Naive thymus-derived CD4-positive, alpha-beta T cell (primary cell): ENCODE measurements at regions of chr9 and their contacts with region 1.

Region 1: GRCh38 chr9:71975833-71976232 is 64.4 kb downstream of the C9orf85 start:
- DNase-seq: no peak
- ATAC-seq: no peak
- H3K4me3 ChIP-seq: no peak overlapping the region
- H3K4me3 Mint-ChIP-seq: no peak overlapping the region
- H3K27ac ChIP-seq: no peak overlapping the region
- H3K27ac Mint-ChIP-seq: no peak overlapping the region
- H3K4me1 ChIP-seq: no peaks in the 10 kb centered on the region
- H3K4me1 Mint-ChIP-seq: no peaks in the 10 kb centered on the region
- H3K27me3 ChIP-seq: no peaks in the 10 kb centered on the region
- H3K27me3 Mint-ChIP-seq: no peaks in the 10 kb centered on the region

Region 2: DNA sequence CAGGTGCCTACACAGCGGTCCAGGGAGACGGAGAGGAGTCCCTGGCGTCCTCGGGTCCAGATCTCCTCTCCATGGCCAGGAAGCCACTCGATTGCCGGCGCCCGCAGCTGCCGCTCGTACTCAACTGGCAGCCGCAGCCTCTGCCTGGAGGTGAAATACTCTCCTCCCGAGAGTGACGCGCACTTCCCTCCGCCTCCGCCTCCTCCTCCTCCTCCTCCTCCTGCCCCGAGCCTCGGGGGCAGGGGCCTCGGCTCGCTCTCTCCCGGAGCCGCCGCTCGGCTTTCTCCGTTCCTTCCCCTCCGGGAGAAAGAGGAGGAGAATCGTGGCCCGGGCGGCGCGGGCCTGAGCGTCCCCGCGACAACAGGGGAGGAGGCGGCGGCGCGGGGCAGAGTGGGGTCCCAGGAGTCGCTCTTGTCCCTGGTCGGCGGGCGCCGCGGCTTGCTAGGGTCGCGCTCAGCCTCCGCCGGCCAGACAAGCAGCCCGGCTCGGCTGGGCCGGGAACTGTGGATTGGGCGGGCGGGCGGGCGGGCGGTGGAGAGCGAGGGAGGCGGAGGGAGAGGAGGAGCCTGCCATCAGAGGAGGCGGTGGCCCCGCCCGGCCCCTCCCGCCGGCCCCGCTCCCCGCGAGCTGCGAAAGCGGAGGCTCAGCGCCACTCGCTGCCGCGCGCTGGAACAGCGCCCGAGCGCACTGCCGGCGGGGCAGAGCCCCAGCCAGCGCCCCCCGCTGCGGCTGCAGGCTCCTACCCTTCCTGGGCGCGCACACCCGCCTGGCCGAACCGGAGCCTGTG is 207.3 kb before region 1 on chr9 and contains the start of gene CEMIP2:
- CTCF ChIA-PET with region 1: no interaction called
- POLR2A ChIA-PET with region 1: no interaction called
- intact Hi-C with region 1: no loop called
- DNase-seq: peak; percentile 86 to 93 (median 89)
- ATAC-seq: peak; percentile 91
- H3K4me3 ChIP-seq: peak within 1 kb of the TSS; percentile 91
- H3K4me3 Mint-ChIP-seq: peak within 1 kb of the TSS; percentile 93 to 99 (median 96)
- H3K27ac ChIP-seq: peak within 1 kb of the TSS; percentile 95
- H3K27ac Mint-ChIP-seq: peak within 1 kb of the TSS; percentile 93 to 98 (median 97)
- H3K4me1 ChIP-seq: peaks cover 18 to 33% of the 10 kb centered on the region in 2 donors
- H3K4me1 Mint-ChIP-seq: peaks cover 28 to 45% (median 39%) of the 10 kb centered on the region in 7 donors
- H3K27me3 ChIP-seq: no peaks in the 10 kb centered on the region
- H3K27me3 Mint-ChIP-seq: no peaks in the 10 kb centered on the region
- total RNA-seq, gene CEMIP2: 69.5 to 183 (median 103) TPM

Region 3: GRCh38 chr9:71806901-71807307 is 168.9 kb before region 1 on chr9:
- CTCF ChIA-PET with region 1: no interaction called
- POLR2A ChIA-PET with region 1: no interaction called
- intact Hi-C with region 1: loop called in 1 of 2 experiments (anchors 5 kb)
- DNase-seq: peak in 8 of 9 donors; percentile 20 to 65 (median 50)
- ATAC-seq: peak; percentile 98
- H3K4me3 ChIP-seq: no peak overlapping the region
- H3K4me3 Mint-ChIP-seq: no peak overlapping the region
- H3K27ac ChIP-seq: no peak overlapping the region
- H3K27ac Mint-ChIP-seq: peak overlapping the region in 7 of 9 donors; percentile 19 to 85 (median 65)
- H3K4me1 ChIP-seq: peaks cover 0 to 7% of the 10 kb centered on the region in 2 donors
- H3K4me1 Mint-ChIP-seq: peaks cover 0 to 21% (median 10%) of the 10 kb centered on the region in 7 donors
- H3K27me3 ChIP-seq: no peaks in the 10 kb centered on the region
- H3K27me3 Mint-ChIP-seq: peaks cover 0 to 3% (median 0%) of the 10 kb centered on the region in 5 donors

Region 4: DNA sequence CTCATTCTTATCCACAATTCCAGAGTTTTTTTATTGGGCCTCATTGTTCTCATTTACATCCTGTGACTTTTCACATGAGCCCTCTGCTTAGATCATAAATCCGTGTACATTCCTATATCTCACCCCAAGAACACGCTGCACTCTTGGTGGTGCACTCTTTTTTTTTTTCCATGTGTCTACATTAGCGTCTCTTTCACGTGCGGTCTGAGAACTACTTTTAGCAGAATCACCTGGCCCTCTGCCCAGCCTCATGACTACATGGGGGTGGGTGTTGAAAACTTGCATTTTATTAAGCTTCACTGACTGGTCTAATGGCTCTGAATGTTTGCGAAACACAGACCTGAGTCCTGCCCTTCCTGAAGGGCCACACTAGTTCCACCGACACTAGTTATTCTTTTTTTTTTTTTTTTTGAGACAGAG is 66.0 kb after region 1 on chr9:
- CTCF ChIA-PET with region 1: no interaction called
- POLR2A ChIA-PET with region 1: no interaction called
- intact Hi-C with region 1: no loop called
- DNase-seq: no peak
- ATAC-seq: peak; percentile 53
- H3K4me3 ChIP-seq: no peak overlapping the region
- H3K4me3 Mint-ChIP-seq: no peak overlapping the region
- H3K27ac ChIP-seq: no peak overlapping the region
- H3K27ac Mint-ChIP-seq: no peak overlapping the region
- H3K4me1 ChIP-seq: peaks cover 0 to 3% of the 10 kb centered on the region in 2 donors
- H3K4me1 Mint-ChIP-seq: peaks cover 0 to 7% (median 4%) of the 10 kb centered on the region in 7 donors
- H3K27me3 ChIP-seq: no peaks in the 10 kb centered on the region
- H3K27me3 Mint-ChIP-seq: peaks cover 4 to 22% (median 6%) of the 10 kb centered on the region in 5 donors